GM13976 (cell line): ENCODE measurements at regions of chr6 and their contacts with region 1.

Region 1: GRCh38 chr6:132483779-132484679 is 28.9 kb downstream of the STX7 start:
- DNase-seq: peak; percentile 29
- CTCF ChIP-seq: peak; percentile 36

Region 2: GRCh38 chr6:132131758-132132157 is 352.3 kb before region 1 on chr6:
- in situ Hi-C with region 1: no loop called
- DNase-seq: no peak
- CTCF ChIP-seq: no peak

Region 3: GRCh38 chr6:132279592-132280139 is 204.4 kb before region 1 on chr6:
- in situ Hi-C with region 1: loop called (anchors 10 kb)
- DNase-seq: peak; percentile 64
- CTCF ChIP-seq: peak; percentile 75

Region 4: DNA sequence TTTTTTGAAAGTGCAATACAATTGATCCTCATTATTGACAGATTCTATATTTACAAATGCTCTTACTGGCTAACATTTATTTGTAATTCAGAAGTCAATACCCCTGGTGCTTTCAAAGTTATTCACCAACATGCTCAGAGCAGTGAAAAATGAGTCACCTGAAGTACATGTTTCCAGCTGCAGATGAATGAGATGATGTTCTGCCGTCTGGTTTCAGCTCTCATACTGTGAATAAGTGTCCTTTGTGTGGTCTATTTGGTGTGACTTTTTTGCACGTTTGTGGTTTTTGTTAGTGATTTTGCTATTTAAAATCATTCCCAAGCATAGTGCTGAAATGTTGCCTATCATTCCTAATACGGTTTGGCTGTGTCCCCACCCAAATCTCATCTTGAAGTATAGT is 734.8 kb after region 1 on chr6:
- in situ Hi-C with region 1: no loop called
- DNase-seq: no peak
- CTCF ChIP-seq: no peak